ENCODE measurements at regions of chr11 and their contacts with region 1.

Region 1: DNA sequence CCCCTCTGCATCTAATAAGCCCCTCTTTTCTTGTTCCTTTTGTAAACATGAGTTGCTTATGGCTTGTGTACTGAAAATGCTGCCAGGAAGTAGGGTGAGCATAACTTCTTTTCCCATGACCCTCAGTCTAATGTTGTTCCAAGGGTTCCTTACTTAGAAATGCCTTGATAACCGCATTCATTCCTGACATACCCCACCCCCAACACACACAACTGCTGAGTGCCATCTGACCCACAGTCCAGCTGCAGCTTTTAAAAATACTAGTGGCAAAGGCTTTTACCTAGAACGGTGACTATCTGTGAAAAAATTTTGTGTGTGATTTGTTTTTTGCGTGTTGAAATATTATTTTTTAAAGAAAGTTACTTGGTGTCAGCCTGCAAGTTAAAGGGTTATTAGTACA is 52.6 kb downstream of the ARHGAP42 start:
- DNase-seq: no peak
- ATAC-seq: peak; percentile 81

Region 2: GRCh38 chr11:100789500-100789899 is 49.8 kb after region 1 on chr11:
- intact Hi-C with region 1: loop called (anchors 5 kb)
- DNase-seq: no peak
- ATAC-seq: no peak

Region 3: GRCh38 chr11:100827934-100828661 is 88.4 kb after region 1 on chr11:
- intact Hi-C with region 1: no loop called
- DNase-seq: no peak
- ATAC-seq: no peak

Region 4: DNA sequence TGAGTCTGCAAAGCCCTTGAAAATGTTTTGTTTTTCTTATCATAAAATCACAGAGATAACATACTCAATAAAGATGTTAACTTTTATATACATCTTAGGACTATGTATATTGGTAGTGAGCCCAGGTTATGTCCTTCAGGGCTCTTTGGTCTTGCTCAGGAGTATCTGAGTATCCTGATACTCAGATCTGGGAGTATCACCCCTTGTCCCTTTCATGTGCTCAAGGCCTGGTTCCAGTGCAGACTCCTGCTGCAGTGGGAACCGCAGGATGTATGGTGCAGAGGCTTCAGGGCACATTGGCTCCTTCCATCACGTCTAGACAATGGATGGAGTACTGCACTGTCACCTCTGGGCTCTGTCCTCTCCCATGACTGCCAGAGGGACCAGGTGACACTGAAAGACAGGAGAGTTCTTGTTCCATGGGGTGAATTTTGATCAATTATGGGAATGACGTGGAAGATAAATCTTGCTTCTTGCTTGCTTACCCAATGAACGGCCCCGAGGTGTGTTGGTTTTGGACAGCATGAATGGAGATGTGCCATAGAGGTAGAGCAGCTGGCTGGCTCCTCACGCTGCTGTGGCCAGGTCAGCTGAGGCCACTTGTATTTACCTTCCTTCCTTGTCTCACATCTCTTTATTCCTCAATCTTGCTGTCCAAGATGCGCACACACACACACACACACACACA is 162.9 kb after region 1 on chr11:
- intact Hi-C with region 1: no loop called
- DNase-seq: no peak
- ATAC-seq: no peak